MCF 10A (cell line): ENCODE measurements at regions of chr7 and their contacts with region 1.

Region 1: GRCh38 chr7:108146070-108146837 is 16.1 kb upstream of the LAMB4 start:
- DNase-seq: peak; percentile 84
- H3K4me3 Mint-ChIP-seq: no peak overlapping the region
- H3K27ac Mint-ChIP-seq: no peak overlapping the region
- H3K4me1 Mint-ChIP-seq: no peaks in the 10 kb centered on the region
- H3K27me3 Mint-ChIP-seq: no peaks in the 10 kb centered on the region
- CTCF ChIP-seq: peak; percentile 96

Region 2: DNA sequence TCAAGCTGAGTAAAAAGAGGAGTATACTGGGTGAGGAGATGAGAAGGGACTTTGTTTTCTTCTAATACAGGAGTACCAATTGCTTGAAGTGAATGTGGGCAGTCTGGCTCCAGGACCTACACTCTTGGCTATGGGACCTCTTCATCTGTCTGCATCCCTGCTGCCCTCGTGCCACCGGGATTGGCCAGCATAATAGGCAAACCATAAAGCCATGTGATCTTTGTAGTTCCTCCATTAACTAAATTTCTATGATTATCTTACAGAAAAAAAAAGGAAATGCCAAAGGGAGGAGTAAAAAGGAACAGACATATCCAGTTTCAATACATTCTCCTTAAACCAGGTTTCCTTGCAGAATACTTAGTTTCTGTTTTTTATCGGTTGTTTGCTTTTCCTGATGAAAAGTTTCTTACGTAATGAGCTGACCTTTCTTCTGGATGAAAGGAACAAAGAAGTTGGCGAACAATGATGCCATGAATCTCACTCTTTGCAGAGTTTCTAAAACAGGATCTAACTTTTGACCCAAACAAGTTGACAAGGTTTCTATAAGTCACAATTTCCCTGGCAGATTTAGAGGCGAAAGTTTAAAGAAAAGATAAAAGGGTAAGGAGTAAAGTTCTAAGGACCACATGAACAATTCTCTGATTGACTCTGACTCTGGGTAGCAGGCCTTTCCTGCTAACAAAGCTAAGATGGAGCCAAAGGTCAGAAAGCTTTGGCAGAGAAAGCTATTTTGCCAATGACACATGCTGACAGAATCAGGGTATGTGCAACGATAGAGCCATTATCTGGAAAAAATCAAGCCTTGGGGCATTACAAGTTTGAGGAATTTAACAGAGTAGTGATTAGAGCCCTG is 197.4 kb before region 1 on chr7:
- CTCF ChIA-PET with region 1: interaction called, 19 read pairs
- POLR2A ChIA-PET with region 1: interaction called, 3 read pairs
- intact Hi-C with region 1: loop called (anchors 5 kb)
- DNase-seq: peak; percentile 90
- H3K4me3 Mint-ChIP-seq: peak overlapping the region; percentile 37
- H3K27ac Mint-ChIP-seq: peak overlapping the region; percentile 85
- H3K4me1 Mint-ChIP-seq: peaks cover 47% of the 10 kb centered on the region
- H3K27me3 Mint-ChIP-seq: no peaks in the 10 kb centered on the region
- CTCF ChIP-seq: no peak

Region 3: GRCh38 chr7:107995184-107996071 is 150.8 kb before region 1 on chr7:
- CTCF ChIA-PET with region 1: interaction called, 7 read pairs
- POLR2A ChIA-PET with region 1: interaction called, 4 read pairs
- intact Hi-C with region 1: loop called (anchors 5 kb)
- DNase-seq: peak; percentile 90
- H3K4me3 Mint-ChIP-seq: peak overlapping the region; percentile 61
- H3K27ac Mint-ChIP-seq: peak overlapping the region; percentile 93
- H3K4me1 Mint-ChIP-seq: peaks cover 37% of the 10 kb centered on the region
- H3K27me3 Mint-ChIP-seq: no peaks in the 10 kb centered on the region
- CTCF ChIP-seq: no peak

Region 4: DNA sequence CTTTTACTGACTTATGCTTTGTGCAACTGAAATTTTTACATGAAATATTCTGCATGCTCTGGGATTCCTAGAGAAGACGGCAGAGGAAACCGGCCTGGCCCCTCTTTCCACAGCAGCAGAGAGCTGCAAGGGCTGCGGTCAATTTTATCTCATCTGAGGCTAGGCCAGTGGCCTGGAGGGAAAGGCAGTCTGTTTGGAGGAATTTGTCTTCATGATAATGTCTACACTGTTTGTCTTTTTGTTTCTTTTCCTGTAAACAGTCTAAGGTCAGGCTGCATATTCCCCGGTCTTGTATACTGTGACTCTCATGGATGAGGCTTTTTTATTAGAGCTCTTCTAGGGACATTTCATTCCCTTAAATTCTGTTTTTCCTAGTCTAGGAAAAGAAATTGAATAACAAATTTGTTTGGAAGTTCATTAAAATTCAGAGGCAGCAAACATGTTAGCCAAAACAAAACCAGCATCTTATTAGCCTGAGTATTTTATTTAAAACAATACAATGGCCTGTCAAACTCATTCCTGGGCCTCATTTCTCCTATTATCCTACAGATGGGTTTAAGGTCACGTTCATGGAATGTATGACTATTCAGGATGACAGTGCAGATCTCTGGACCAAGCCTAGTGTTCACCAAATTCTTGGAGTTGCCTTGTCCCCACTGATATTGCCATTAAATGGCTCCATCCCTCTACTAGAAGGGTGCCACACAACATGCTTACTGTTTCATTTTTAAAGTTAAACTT is 42.5 kb before region 1 on chr7:
- CTCF ChIA-PET with region 1: interaction called, 79 read pairs
- POLR2A ChIA-PET with region 1: interaction called, 5 read pairs
- intact Hi-C with region 1: no loop called
- DNase-seq: no peak
- H3K4me3 Mint-ChIP-seq: no peak overlapping the region
- H3K27ac Mint-ChIP-seq: no peak overlapping the region
- H3K4me1 Mint-ChIP-seq: no peaks in the 10 kb centered on the region
- H3K27me3 Mint-ChIP-seq: peaks cover 10% of the 10 kb centered on the region
- CTCF ChIP-seq: no peak

Region 5: DNA sequence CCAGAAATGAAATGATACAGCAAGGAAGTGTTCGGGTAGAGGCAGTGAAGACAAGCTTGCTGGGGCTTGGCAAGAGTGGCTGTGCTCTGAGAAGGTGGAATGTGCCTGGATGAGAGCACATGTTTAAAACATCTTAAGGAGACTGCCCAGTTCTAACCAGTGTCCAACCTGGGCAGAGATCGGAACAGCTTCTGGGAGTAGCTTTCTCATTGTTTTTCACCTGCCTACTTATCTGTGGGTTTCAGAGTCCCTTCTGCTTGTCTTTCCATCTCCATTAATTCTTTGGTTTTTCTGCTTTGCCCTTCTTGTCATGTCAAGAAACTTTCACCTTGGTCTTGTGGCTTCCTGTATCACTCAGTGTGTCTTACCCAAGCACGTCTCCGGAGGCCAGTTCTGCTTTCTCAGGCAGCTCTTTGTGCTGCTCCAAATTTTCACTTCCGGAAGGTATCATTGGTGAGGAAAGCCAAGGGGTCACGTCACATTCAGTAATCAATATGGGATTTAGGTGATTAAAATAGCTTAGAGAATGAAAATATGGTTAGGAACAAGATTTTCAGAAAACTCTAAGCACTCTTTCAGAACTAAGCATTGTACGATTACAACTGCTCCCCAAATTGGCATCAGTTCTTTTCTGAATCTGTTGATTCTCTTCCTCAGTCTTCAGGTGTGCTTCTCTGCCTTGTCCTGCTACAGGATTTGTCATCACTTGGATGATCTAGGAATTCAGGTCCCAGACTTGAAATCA is 10.6 kb before region 1 on chr7:
- CTCF ChIA-PET with region 1: interaction called, 36 read pairs
- POLR2A ChIA-PET with region 1: interaction called, 4 read pairs
- intact Hi-C with region 1: no loop called
- DNase-seq: no peak
- H3K4me3 Mint-ChIP-seq: no peak overlapping the region
- H3K27ac Mint-ChIP-seq: no peak overlapping the region
- H3K4me1 Mint-ChIP-seq: peaks cover 6% of the 10 kb centered on the region
- H3K27me3 Mint-ChIP-seq: no peaks in the 10 kb centered on the region
- CTCF ChIP-seq: no peak

Region 6: DNA sequence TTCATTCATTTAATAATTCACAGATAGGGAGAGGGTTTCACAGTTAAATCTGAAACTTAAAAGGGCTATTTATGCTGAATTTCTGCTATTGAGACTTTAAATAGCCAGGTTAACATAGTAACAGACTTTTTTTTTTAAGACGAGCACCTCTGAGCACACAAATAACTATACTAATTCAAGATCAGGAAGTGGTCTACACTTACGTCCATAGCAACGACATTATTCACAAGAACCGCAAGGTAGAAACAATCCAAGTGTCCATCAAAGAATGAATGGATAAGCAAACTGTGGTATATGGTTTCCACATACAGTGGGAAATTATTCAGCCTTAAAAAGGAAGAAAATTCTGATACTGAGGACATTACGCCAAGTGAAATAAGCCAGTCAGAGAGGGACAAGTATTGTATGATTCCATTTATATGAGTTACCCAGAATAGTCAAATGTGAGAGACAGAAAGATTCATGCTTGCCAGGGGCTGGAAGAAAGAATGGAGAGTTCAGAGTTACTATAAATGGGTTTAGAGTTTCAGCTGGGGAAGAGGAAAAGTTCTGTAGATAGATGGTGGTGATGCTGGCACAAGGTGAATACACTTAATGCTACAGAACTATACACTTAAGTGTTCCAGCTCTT is 124.2 kb after region 1 on chr7:
- CTCF ChIA-PET with region 1: no interaction called
- POLR2A ChIA-PET with region 1: no interaction called
- intact Hi-C with region 1: no loop called
- DNase-seq: no peak
- H3K4me3 Mint-ChIP-seq: no peak overlapping the region
- H3K27ac Mint-ChIP-seq: no peak overlapping the region
- H3K4me1 Mint-ChIP-seq: peaks cover 5% of the 10 kb centered on the region
- H3K27me3 Mint-ChIP-seq: no peaks in the 10 kb centered on the region
- CTCF ChIP-seq: no peak